IMR-90 (cell line): ENCODE measurements at regions of chr11 and their contacts with region 1.

Region 1: DNA sequence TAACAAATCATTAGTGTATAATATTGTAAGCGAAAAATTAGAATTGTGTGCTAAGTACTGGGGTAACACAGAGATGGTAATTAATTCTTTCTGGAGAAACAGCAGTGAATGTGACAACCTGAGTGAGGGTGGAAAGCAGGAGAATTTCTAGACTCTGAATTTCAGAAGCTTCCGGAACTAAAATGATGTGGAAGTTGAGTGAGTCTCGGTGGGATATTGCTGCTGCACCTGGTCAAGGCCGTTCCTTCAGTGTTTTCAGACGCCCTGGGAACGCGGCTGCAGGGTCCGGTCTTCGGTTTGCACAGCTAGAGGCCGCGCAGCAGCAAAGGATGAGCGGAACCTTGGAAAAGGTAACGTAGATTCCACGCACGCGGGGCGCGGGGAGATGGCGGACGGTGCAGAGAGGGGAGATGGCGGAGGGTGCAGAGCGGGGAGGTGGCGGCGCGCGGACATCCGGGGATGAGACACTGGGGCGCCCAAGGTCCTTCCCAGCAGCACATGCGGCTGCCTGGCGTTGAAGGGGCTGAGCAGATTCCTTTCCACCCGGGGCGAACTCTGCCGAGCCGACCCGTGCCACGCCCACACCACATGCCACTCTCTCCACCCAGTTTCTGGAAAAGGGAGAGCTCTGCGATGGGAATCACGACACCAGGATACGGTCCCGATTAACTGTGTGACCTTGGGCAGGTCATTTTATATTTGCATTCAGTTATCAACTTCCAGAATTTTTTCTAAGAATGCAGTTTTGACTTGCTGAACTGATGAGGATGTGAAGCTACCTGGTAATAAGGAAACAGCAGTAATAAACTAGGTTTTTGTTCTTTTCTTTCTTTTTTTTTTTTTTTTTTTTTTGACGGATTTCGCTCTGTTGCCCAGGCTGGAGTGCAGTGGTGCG is at the start of gene MRPL48:
- DNase-seq: peak; percentile 90
- ATAC-seq: peak; percentile 99
- H3K4me3 ChIP-seq: peak within 1 kb of the TSS; percentile 69
- H3K27ac ChIP-seq: peak within 1 kb of the TSS; percentile 88
- H3K4me1 ChIP-seq: peaks cover 2% of the 10 kb centered on the region; the same call in 1 of the 2 replicates
- H3K27me3 ChIP-seq: no peaks in the 10 kb centered on the region
- CTCF ChIP-seq: no peak
- POLR2A ChIP-seq: no peak
- RAD21 ChIP-seq: 0 out of 2 replicates have a peak, but pooled peaks have one; percentile 16
- total RNA-seq, gene MRPL48: 24.0 and 30.3 TPM in 2 replicates

Region 2: GRCh38 chr11:73404048-73404447 is 383.8 kb before region 1 on chr11:
- CTCF ChIA-PET with region 1: no interaction called
- POLR2A ChIA-PET with region 1: no interaction called
- dilution Hi-C with region 1: no loop called
- in situ Hi-C with region 1: no loop called
- intact Hi-C with region 1: no loop called
- DNase-seq: peak; percentile 40
- ATAC-seq: peak; percentile 74
- H3K4me3 ChIP-seq: no peak overlapping the region
- H3K27ac ChIP-seq: no peak overlapping the region
- H3K4me1 ChIP-seq: peaks cover 4% of the 10 kb centered on the region; the same call in 1 of the 2 replicates
- H3K27me3 ChIP-seq: no peaks in the 10 kb centered on the region
- CTCF ChIP-seq: peak; percentile 60
- POLR2A ChIP-seq: no peak
- RAD21 ChIP-seq: peak; percentile 76

Region 3: GRCh38 chr11:73876424-73877300 is 88.8 kb after region 1 on chr11 and contains the starts of genes COA4 and PAAF1:
- CTCF ChIA-PET with region 1: no interaction called
- POLR2A ChIA-PET with region 1: no interaction called
- dilution Hi-C with region 1: no loop called
- in situ Hi-C with region 1: no loop called
- intact Hi-C with region 1: loop called (anchors 5 kb)
- DNase-seq: peak; percentile 95
- ATAC-seq: peak; percentile 97
- H3K4me3 ChIP-seq: peak within 1 kb of the TSS; percentile 97
- H3K27ac ChIP-seq: peak within 1 kb of the TSS; percentile 99
- H3K4me1 ChIP-seq: peaks cover 5% of the 10 kb centered on the region
- H3K27me3 ChIP-seq: no peaks in the 10 kb centered on the region
- CTCF ChIP-seq: no peak
- POLR2A ChIP-seq: peak; percentile 68; the same call in 1 of the 2 replicates
- RAD21 ChIP-seq: no peak
- total RNA-seq, gene COA4: 78.0 and 95.5 TPM in 2 replicates
- total RNA-seq, gene PAAF1: 15.0 and 15.1 TPM in 2 replicates

Region 4: GRCh38 chr11:74055938-74056337 is 268.0 kb after region 1 on chr11:
- CTCF ChIA-PET with region 1: no interaction called
- POLR2A ChIA-PET with region 1: interaction called, 10 read pairs
- dilution Hi-C with region 1: no loop called
- in situ Hi-C with region 1: no loop called
- intact Hi-C with region 1: no loop called
- DNase-seq: peak; percentile 88
- ATAC-seq: peak; percentile 89
- H3K4me3 ChIP-seq: no peak overlapping the region
- H3K27ac ChIP-seq: no peak overlapping the region
- H3K4me1 ChIP-seq: peaks cover 10% of the 10 kb centered on the region
- H3K27me3 ChIP-seq: no peaks in the 10 kb centered on the region
- CTCF ChIP-seq: no peak
- POLR2A ChIP-seq: no peak
- RAD21 ChIP-seq: 0 out of 2 replicates have a peak, but pooled peaks have one; percentile 9